Transverse colon (tissue), 4 donors: ENCODE measurements at regions of chr12 and their contacts with region 1.

Region 1: GRCh38 chr12:121427556-121428055 is 27.7 kb downstream of the RNF34 start:
- DNase-seq: no peak
- H3K4me3 ChIP-seq: no peak overlapping the region
- H3K27ac ChIP-seq: peak overlapping the region in 1 of 4 donors; percentile 4
- H3K4me1 ChIP-seq: peaks cover 0 to 3% (median 0%) of the 10 kb centered on the region in 4 donors
- H3K27me3 ChIP-seq: no peaks in the 10 kb centered on the region
- CTCF ChIP-seq: no peak
- EP300 ChIP-seq: no peak
- POLR2A ChIP-seq: no peak

Region 2: GRCh38 chr12:121490401-121491281 is 63.0 kb after region 1 on chr12:
- in situ Hi-C with region 1: no loop called
- intact Hi-C with region 1: loop called (anchors 2 kb)
- DNase-seq: no peak
- H3K4me3 ChIP-seq: no peak overlapping the region
- H3K27ac ChIP-seq: no peak overlapping the region
- H3K4me1 ChIP-seq: no peaks in the 10 kb centered on the region
- H3K27me3 ChIP-seq: no peaks in the 10 kb centered on the region
- CTCF ChIP-seq: no peak
- EP300 ChIP-seq: no peak
- POLR2A ChIP-seq: no peak

Region 3: DNA sequence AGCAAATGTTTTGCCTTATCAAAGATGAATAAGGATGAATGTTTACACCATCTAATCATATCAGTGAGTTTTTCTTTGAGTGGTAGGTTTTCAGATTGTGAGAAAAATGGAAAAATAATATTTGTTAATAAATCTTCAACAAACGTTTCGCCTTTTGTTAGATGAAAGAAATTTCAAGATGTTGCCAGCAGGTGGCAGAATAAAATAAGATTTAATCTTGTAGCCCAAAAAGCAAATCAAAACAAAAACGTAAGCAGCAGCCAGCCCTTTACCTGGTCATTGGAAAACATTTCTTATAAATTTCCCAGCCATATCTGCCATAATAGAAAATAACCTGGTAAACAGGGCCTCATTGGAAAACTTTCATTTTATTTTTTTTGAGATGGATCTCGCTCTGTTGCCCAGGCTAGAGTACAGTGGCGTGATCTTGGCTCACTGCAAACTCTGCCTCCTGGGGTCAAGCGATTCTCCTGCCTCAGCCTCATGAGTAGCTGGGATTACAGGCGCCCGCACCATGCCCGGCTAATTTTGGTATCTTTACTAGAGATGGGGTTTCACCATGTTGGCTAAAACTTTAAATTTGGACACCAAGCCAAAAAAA is 269.6 kb after region 1 on chr12:
- in situ Hi-C with region 1: no loop called
- intact Hi-C with region 1: no loop called
- DNase-seq: no peak
- H3K4me3 ChIP-seq: no peak overlapping the region
- H3K27ac ChIP-seq: no peak overlapping the region
- H3K4me1 ChIP-seq: peaks cover 0 to 4% (median 2%) of the 10 kb centered on the region in 4 donors
- H3K27me3 ChIP-seq: no peaks in the 10 kb centered on the region
- CTCF ChIP-seq: peak; percentile 54 to 87 (median 62)
- EP300 ChIP-seq: no peak
- POLR2A ChIP-seq: no peak